Heart left ventricle (tissue), 16 donors: ENCODE measurements at regions of chrX and their contacts with region 1.

Region 1: GRCh38 chrX:13029341-13029740 is 15.1 kb downstream of the FAM9C start:
- DNase-seq: peak; percentile 57 to 79 (median 70)
- ATAC-seq: peak; percentile 62 to 80 (median 72)
- H3K4me3 ChIP-seq: peak overlapping the region in 1 of 12 donors; percentile 7
- H3K27ac ChIP-seq: peak overlapping the region in 11 of 12 donors; percentile 43 to 84 (median 71)
- H3K4me1 ChIP-seq: peaks cover 0 to 32% (median 14%) of the 10 kb centered on the region in 12 donors
- H3K27me3 ChIP-seq: peaks cover 0 to 15% (median 0%) of the 10 kb centered on the region in 9 donors
- CTCF ChIP-seq: no peak
- POLR2A ChIP-seq: no peak

Region 2: DNA sequence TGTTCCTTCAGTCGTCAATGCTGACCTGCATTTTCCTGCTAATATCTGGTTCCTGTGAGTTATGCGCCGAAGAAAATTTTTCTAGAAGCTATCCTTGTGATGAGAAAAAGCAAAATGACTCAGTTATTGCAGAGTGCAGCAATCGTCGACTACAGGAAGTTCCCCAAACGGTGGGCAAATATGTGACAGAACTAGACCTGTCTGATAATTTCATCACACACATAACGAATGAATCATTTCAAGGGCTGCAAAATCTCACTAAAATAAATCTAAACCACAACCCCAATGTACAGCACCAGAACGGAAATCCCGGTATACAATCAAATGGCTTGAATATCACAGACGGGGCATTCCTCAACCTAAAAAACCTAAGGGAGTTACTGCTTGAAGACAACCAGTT is 110.3 kb before region 1 on chrX:
- intact Hi-C with region 1: no loop called
- DNase-seq: no peak
- ATAC-seq: no peak
- H3K4me3 ChIP-seq: no peak overlapping the region
- H3K27ac ChIP-seq: no peak overlapping the region
- H3K4me1 ChIP-seq: no peaks in the 10 kb centered on the region
- H3K27me3 ChIP-seq: peaks cover 0 to 80% (median 0%) of the 10 kb centered on the region in 9 donors
- CTCF ChIP-seq: no peak
- POLR2A ChIP-seq: no peak

Region 3: DNA sequence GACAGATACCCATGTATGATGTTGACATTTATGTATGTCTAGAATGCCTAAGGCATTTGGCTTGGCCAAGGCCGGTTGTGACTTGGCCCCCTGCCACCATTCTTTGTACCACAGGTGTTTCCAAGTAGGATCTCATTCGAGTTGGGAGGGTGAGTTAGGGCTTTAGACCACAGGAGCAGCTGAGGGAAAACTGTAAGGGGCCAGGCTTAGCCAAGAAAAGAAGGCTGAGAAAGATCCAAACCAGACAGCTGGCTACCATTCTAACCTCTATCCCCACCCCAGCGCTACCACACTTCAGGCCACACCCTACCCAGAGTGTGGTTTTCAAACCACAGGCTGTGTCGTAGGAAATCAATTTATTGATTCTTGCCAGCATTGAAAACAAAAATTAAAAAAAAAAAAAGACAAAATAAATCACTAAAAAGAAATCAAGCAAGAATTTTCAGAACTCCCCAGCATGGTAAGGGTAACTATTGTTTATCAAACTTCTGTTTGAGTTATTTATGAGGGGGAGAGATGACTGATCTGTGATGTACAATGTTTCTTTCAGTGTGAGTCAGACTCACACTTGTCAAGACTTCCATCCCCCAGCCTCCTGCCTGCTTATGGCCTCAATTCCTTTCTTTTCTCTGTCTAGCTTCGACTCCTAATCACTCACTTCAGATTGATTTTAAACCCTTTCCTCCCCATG is 44.6 kb before region 1 on chrX:
- intact Hi-C with region 1: loop called in 2 of 10 experiments (anchors 5 to 10 kb)
- DNase-seq: no peak
- ATAC-seq: peak in 2 of 4 donors; percentile 18 to 52
- H3K4me3 ChIP-seq: no peak overlapping the region
- H3K27ac ChIP-seq: peak overlapping the region in 1 of 12 donors; percentile 56
- H3K4me1 ChIP-seq: peaks cover 0 to 60% (median 8%) of the 10 kb centered on the region in 12 donors
- H3K27me3 ChIP-seq: peaks cover 0 to 12% (median 0%) of the 10 kb centered on the region in 9 donors
- CTCF ChIP-seq: no peak
- POLR2A ChIP-seq: no peak

Region 4: DNA sequence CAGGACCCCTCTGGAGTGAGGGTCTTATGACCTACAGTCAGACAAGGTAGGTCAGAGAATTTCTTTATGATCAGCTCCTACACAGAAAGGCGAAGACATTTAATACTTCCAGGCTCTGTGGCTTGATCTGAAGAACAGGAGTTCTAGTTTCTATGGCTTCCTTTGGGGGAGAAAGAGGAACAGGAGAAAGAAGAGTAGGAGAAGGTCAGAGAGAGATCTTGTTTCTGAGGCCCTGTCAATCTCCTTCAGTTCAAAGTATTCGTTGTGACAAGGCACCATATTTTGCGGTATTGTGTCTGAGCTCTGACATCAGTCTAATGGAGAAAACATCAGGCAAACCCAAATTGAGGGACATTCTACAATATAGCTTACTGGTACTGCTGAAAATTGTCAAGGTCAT is 37.8 kb before region 1 on chrX:
- intact Hi-C with region 1: loop called in 1 of 10 experiments (anchors 2 kb)
- DNase-seq: no peak
- ATAC-seq: no peak
- H3K4me3 ChIP-seq: no peak overlapping the region
- H3K27ac ChIP-seq: no peak overlapping the region
- H3K4me1 ChIP-seq: peaks cover 0 to 23% (median 7%) of the 10 kb centered on the region in 12 donors
- H3K27me3 ChIP-seq: peaks cover 0 to 28% (median 0%) of the 10 kb centered on the region in 9 donors
- CTCF ChIP-seq: no peak
- POLR2A ChIP-seq: no peak

Region 5: GRCh38 chrX:13087322-13088155 is 58.2 kb after region 1 on chrX:
- intact Hi-C with region 1: loop called in 1 of 10 experiments (anchors 10 kb)
- DNase-seq: no peak
- ATAC-seq: peak in 1 of 4 donors; percentile 63
- H3K4me3 ChIP-seq: no peak overlapping the region
- H3K27ac ChIP-seq: peak overlapping the region in 2 of 12 donors; percentile 37 to 90
- H3K4me1 ChIP-seq: peaks cover 0 to 91% (median under 1%) of the 10 kb centered on the region in 12 donors
- H3K27me3 ChIP-seq: no peaks in the 10 kb centered on the region
- CTCF ChIP-seq: no peak
- POLR2A ChIP-seq: no peak